Endothelial cell of umbilical vein (primary cell): ENCODE measurements at regions of chr18 and their contacts with region 1.

Region 1: DNA sequence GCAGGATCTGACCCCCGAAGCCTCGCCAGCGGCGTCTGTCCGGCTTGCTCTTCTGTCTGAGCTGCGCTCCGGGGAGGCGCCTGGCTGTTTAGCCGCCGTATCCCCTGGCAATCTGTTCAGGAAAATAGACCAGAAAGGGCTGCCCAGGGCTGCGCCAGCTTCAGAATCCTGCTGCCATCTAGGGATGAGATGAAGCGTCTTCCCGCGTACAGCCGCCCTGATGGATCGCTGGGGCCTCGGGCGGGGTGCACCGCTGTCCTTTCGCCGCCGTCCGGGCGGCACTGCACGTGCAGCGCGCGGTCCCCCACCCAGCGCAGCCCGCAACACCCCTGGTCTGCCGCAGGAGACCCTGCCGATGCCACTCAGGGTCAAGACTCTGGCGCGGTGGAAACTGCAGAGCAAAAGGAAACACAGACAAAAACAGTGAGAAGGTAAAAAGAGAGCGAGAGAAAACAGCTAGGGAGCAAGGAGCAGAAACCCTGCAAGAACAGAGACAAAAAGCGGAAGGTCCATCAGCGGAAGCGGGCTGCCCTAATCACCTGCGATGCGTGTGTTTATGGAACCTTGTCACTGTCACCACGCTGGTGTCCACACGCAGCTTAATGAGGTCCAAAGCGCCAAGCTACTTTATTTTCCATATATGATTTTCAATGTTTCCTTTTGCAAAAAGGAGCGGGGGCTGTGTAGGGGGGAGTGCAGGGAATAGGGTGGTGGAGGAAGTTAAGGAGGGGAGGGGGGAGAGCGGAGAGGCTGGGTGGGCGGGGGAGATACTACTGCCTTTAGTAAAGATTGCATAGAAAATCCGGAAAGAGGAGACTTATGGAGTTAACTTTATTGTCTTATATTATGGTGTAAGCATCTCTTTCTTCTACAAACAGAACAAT is 2113.3 kb upstream of the PIK3C3 start:
- DNase-seq: peak; percentile 76
- H3K4me3 ChIP-seq: peak overlapping the region in 2 of 3 experiments; percentile 24 to 44
- H3K27ac ChIP-seq: no peak overlapping the region
- H3K4me1 ChIP-seq: peaks cover 27% of the 10 kb centered on the region
- H3K27me3 ChIP-seq: no peaks in the 10 kb centered on the region
- CTCF ChIP-seq: peak; percentile 39 to 63
- POLR2A ChIP-seq: no peak

Region 2: GRCh38 chr18:39057423-39058057 is 784.2 kb before region 1 on chr18:
- CTCF ChIA-PET with region 1: no interaction called
- POLR2A ChIA-PET with region 1: no interaction called
- dilution Hi-C with region 1: no loop called
- intact Hi-C with region 1: loop called (anchors 10 kb)
- DNase-seq: peak; percentile 81
- H3K4me3 ChIP-seq: no peak overlapping the region
- H3K27ac ChIP-seq: peak overlapping the region; percentile 88
- H3K4me1 ChIP-seq: peaks cover 27% of the 10 kb centered on the region
- H3K27me3 ChIP-seq: peaks cover 3 to 7% of the 10 kb centered on the region in 2 experiments
- CTCF ChIP-seq: no peak
- POLR2A ChIP-seq: no peak

Region 3: DNA sequence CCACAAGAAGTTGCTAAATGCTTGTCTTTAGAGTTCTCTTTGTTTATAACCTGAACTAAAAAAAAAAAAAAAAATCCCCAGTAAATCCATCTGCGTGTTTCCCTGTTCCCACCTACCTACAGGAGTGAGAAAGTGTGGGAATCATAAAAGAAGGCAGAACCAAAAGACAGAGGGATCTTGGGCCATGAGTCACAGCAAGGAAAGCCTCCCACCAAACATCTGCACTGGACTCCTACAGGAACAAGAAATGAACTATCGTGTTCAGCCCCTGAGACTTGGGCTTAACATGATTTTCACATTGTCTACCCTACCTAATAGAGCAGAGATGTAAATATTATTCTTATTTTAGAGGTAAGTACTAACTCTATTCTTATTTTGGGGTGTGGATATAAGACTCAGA is 515.0 kb before region 1 on chr18:
- CTCF ChIA-PET with region 1: no interaction called
- POLR2A ChIA-PET with region 1: no interaction called
- dilution Hi-C with region 1: no loop called
- intact Hi-C with region 1: no loop called
- DNase-seq: no peak
- H3K4me3 ChIP-seq: no peak overlapping the region
- H3K27ac ChIP-seq: no peak overlapping the region
- H3K4me1 ChIP-seq: no peaks in the 10 kb centered on the region
- H3K27me3 ChIP-seq: no peaks in the 10 kb centered on the region
- CTCF ChIP-seq: no peak
- POLR2A ChIP-seq: no peak

Region 4: DNA sequence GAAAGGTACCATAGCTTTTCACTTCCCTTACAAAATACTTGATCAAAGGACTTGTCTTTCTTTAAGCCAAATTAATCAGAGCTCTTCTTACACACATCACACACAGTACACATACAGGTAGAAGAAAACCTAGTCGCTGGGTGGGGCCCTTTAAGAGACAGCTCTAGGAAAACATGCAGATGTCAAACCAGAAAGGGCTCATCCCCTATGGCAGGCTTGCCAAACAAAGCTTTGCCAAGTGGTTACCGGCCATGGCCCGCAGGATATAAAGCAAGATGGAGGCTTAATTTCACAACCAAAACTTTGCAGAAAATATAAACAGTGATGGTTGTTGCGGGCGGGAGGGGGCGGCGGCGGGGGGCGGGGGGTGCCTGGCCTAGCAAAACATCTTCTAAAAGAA is 42.7 kb before region 1 on chr18:
- CTCF ChIA-PET with region 1: interaction called, 14 read pairs
- POLR2A ChIA-PET with region 1: interaction called, 4 read pairs
- dilution Hi-C with region 1: no loop called
- intact Hi-C with region 1: loop called (anchors 2 kb)
- DNase-seq: peak; percentile 14
- H3K4me3 ChIP-seq: peak overlapping the region in 2 of 3 experiments; percentile 58 to 90
- H3K27ac ChIP-seq: no peak overlapping the region
- H3K4me1 ChIP-seq: peaks cover 6% of the 10 kb centered on the region
- H3K27me3 ChIP-seq: no peaks in the 10 kb centered on the region
- CTCF ChIP-seq: no peak
- POLR2A ChIP-seq: no peak

Region 5: DNA sequence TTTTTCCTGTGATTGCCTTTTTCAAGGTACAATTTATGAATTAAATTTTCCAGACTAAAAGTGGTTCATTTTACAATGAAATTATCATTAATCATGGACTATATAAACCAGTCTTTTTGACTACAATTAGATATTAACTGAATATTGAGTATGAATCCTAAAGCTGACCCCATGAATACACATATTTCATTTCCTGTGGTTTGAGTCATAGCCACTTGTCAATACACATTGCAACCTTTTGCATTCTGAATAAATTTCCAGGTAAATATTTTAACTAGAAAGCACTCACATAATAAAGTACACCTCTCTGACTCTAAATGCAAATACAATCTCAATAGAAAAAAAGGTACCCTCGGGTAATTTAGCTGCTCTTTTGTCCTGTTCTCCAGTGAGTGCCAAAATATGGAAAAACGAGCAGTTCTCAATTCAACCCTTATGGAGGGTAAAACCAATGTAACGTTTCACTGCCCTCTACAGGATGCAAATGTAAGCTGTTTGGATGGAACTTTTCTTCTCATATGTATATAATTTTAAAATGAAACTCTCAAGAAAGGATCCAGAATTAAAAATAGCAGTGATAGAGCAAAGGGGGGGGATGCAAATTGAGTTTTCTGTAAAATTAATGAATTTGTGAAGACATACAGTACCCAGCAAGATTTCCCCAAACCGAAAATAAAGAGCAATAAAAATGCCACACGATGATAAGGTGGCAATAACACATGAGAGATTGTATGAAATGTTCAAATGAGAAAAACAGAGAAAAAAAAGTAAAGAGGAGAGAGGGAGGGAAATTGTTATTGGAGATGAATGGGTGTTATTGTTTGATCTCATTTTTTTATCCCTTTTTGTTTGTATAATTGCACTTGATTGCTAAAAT is 317.7 kb after region 1 on chr18:
- CTCF ChIA-PET with region 1: interaction called, 24 read pairs
- POLR2A ChIA-PET with region 1: no interaction called
- dilution Hi-C with region 1: no loop called
- intact Hi-C with region 1: loop called (anchors 1 kb)
- DNase-seq: peak; percentile 63
- H3K4me3 ChIP-seq: no peak overlapping the region
- H3K27ac ChIP-seq: no peak overlapping the region
- H3K4me1 ChIP-seq: peaks cover 6% of the 10 kb centered on the region
- H3K27me3 ChIP-seq: no peaks in the 10 kb centered on the region
- CTCF ChIP-seq: peak; percentile 44 to 63
- POLR2A ChIP-seq: no peak

Region 6: DNA sequence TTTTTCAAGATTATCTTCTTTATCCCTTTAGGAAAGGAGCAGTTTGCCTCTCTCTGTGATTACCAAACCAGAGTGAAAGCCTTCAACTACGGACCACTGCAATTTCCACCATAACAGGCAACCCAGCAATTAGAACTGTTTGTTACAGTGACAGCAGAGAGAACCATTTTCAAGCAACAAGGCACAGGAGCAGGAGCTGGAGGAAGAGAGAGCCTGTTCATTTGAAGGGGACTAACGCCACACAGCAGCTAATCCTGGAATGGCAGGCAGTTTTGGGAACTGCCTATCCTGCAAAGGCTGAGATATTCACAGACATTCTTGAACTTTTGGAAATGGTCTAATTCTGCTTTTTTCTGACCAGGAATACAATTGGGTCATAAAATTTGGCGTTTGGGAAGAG is 571.4 kb after region 1 on chr18:
- CTCF ChIA-PET with region 1: interaction called, 4 read pairs
- POLR2A ChIA-PET with region 1: no interaction called
- dilution Hi-C with region 1: no loop called
- intact Hi-C with region 1: loop called (anchors 5 kb)
- DNase-seq: peak; percentile 69
- H3K4me3 ChIP-seq: no peak overlapping the region
- H3K27ac ChIP-seq: no peak overlapping the region
- H3K4me1 ChIP-seq: no peaks in the 10 kb centered on the region
- H3K27me3 ChIP-seq: no peaks in the 10 kb centered on the region
- CTCF ChIP-seq: peak; percentile 50 to 72
- POLR2A ChIP-seq: no peak